HepG2 (cell line): ENCODE measurements at regions of chr7 and their contacts with region 1.

Region 1: DNA sequence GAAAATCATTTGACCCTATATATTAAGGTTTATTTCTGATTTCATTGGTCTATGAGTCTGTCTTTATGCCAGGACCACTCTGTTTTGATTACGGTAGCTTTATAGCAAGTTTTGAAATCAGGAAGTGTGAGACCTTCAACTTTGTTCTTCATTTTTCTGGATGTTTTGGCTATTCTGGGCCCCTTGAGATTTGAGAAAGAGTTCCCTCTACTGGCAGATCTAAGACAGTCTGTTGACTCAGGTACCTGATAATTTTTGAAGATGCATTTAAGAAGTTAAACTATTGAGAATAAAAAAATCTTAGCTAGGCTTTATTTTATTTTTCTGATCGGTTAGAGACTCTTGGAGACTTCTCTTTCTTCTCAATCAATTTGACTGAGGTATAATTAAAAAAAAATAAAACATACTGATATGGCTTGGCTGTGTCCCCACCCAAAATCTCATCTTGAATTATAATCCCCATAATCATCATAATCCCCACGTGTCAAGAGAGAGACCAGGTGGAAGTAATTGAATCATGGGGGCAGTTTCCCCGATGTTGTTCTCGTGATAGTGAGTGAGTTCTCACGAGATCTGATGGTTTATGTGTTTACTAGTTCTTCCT is 209.2 kb downstream of the SNX10 start:
- DNase-seq: peak; percentile 22
- ATAC-seq: no peak; the same call in 2 of the 3 replicates
- H3K4me3 ChIP-seq: no peak overlapping the region
- H3K27ac ChIP-seq: no peak overlapping the region
- H3K4me1 ChIP-seq: no peaks in the 10 kb centered on the region; the same call in 1 of the 2 replicates
- H3K27me3 ChIP-seq: peaks cover 0 to 22% of the 10 kb centered on the region in 2 experiments; a peak in 2 of 5 replicates
- CTCF ChIP-seq: peak; percentile 45
- EP300 ChIP-seq: no peak
- POLR2A ChIP-seq: no peak
- RAD21 ChIP-seq: no peak

Region 2: GRCh38 chr7:26265065-26265464 is 235.8 kb before region 1 on chr7:
- CTCF ChIA-PET with region 1: no interaction called
- POLR2A ChIA-PET with region 1: no interaction called
- in situ Hi-C with region 1: loop called (anchors 25 kb)
- intact Hi-C with region 1: no loop called
- DNase-seq: no peak
- ATAC-seq: no peak
- H3K4me3 ChIP-seq: no peak overlapping the region
- H3K27ac ChIP-seq: no peak overlapping the region
- H3K4me1 ChIP-seq: no peaks in the 10 kb centered on the region
- H3K27me3 ChIP-seq: no peaks in the 10 kb centered on the region
- CTCF ChIP-seq: no peak
- EP300 ChIP-seq: no peak
- POLR2A ChIP-seq: no peak
- RAD21 ChIP-seq: no peak

Region 3: DNA sequence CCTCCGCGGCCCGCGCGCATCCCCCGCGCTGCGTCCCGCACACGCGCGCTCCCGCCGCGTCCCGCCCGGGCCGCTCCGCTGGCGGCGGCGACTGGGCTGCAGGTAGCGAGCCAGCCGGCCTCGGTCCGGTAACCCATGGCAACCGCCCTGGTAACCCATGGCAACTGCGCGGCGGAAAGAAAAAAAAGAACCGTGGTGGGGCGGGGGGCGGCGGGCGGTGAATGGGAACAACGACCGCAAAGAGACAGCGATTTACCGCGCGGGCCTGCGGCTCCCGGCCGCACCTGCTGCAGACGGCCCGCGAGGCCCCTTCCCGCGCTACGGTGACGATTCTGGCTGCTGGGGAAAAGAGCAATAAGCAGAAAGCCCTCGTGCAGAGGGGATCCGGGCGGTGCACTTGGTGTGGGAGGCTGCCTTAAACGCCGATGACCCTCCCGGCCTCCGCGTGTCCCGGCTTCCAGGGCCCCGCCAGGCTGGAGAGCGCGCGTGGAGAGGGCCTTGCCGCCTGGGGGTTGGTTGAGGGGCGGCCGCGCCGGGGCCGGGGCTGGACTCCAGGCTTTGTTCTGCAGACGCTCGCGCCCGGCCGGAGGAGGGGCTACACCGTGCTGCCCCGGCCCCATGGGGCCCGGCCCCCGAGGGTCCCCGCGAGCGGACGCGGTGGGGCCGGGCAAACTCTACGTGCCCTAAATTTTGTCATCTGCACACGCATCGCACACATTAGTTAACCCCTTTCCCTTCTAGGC is 124.5 kb before region 1 on chr7:
- CTCF ChIA-PET with region 1: interaction called, 8 read pairs
- POLR2A ChIA-PET with region 1: no interaction called
- in situ Hi-C with region 1: loop called (anchors 5 kb)
- intact Hi-C with region 1: loop called (anchors 1 kb)
- DNase-seq: peak; percentile 23
- ATAC-seq: peak; percentile 93
- H3K4me3 ChIP-seq: peak overlapping the region; percentile 57 to 74 (median 72)
- H3K27ac ChIP-seq: peak overlapping the region; percentile 31
- H3K4me1 ChIP-seq: peaks cover 5% of the 10 kb centered on the region; the same call in 1 of the 2 replicates
- H3K27me3 ChIP-seq: no peaks in the 10 kb centered on the region
- CTCF ChIP-seq: no peak
- EP300 ChIP-seq: no peak
- POLR2A ChIP-seq: 0 out of 4 replicates have a peak, but pooled peaks of 1 of the 2 experiments have one; percentile 20
- RAD21 ChIP-seq: no peak

Region 4: GRCh38 chr7:26515314-26515842 is 14.5 kb after region 1 on chr7:
- CTCF ChIA-PET with region 1: no interaction called
- POLR2A ChIA-PET with region 1: no interaction called
- in situ Hi-C with region 1: no loop called
- intact Hi-C with region 1: no loop called
- DNase-seq: no peak
- ATAC-seq: no peak
- H3K4me3 ChIP-seq: no peak overlapping the region
- H3K27ac ChIP-seq: no peak overlapping the region
- H3K4me1 ChIP-seq: no peaks in the 10 kb centered on the region
- H3K27me3 ChIP-seq: peaks cover 5 to 47% of the 10 kb centered on the region in 2 experiments; a peak in 4 of 5 replicates
- CTCF ChIP-seq: no peak
- EP300 ChIP-seq: no peak
- POLR2A ChIP-seq: no peak
- RAD21 ChIP-seq: no peak

Region 5: DNA sequence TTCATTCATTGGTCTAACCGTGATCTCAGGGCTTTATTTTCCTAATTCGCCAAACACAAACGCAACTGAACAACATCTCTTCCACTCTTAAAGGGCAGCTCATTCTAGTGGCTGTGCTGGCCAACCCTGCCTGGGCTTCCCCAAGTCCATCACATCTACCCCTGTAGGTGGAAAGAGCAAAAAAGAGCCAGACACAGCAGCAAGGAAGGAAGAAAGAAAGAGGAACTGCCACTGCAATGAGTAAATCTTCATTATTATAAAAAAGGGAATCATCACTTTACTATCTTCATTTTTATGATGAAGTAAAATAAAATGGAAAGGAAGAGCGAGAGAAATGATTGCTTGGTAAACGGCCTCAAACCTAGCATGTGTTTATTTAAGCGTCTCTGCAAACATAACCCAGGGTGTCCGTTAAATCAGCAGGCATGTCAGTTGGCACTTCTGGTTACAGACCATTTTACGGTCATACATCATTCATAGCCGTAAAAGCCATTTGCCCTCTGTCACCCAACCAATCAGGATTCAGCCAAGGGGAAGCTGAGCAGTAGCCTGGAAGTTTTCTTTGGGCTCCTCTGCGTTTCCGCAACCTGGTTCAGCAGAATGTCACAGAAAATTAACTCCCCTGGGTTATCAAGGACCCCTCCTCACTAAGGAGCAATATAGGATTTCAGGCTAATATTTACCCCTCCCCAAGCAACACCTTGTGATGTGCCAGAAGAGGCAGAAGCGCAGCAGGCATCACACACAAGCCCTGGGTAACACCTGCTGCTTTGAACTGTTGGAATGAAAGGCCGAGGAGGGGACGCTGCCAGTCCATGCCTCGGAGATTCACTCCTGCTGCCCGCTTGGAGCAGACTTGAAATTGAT is 24.8 kb after region 1 on chr7:
- CTCF ChIA-PET with region 1: no interaction called
- POLR2A ChIA-PET with region 1: no interaction called
- in situ Hi-C with region 1: no loop called
- intact Hi-C with region 1: no loop called
- DNase-seq: no peak
- ATAC-seq: no peak
- H3K4me3 ChIP-seq: no peak overlapping the region
- H3K27ac ChIP-seq: no peak overlapping the region
- H3K4me1 ChIP-seq: no peaks in the 10 kb centered on the region
- H3K27me3 ChIP-seq: peaks cover 0 to 11% of the 10 kb centered on the region in 2 experiments; a peak in 2 of 5 replicates
- CTCF ChIP-seq: no peak
- EP300 ChIP-seq: no peak
- POLR2A ChIP-seq: no peak
- RAD21 ChIP-seq: no peak

Region 6: DNA sequence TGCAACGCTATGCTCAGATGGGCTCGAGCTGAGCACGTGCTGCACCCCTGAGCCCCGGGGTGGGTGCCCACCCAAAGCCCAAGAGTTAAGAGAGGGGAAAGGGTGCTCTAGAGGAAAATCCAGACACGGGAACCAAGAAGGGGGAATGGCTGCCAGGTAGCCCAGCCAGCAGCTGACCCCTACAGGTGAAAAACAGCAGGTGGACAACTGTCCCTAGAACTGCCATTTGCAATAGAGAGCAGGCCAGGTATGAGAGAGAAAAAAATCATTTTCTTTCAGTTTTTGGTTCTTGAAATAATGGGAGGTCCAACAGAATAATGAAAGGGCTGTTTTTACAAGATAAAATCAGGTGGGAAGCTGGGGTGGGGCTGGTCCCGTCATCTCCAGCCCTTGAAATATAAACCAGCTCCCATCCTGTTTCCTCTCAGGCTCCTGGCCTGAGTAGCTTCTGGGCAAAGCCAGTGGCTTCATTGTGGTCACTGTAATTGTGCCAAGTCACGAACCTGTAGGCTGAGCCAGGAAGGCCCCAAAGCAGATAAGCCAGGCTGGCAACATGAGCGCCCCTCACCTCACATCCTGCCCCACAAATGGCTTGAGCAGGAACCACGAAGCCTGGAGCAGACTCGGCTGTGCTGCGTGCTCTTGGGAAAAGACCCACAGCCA is 48.6 kb after region 1 on chr7:
- CTCF ChIA-PET with region 1: no interaction called
- POLR2A ChIA-PET with region 1: no interaction called
- in situ Hi-C with region 1: no loop called
- intact Hi-C with region 1: no loop called
- DNase-seq: no peak
- ATAC-seq: no peak
- H3K4me3 ChIP-seq: no peak overlapping the region
- H3K27ac ChIP-seq: no peak overlapping the region
- H3K4me1 ChIP-seq: no peaks in the 10 kb centered on the region
- H3K27me3 ChIP-seq: peaks cover 2 to 23% of the 10 kb centered on the region in 2 experiments; a peak in 4 of 5 replicates
- CTCF ChIP-seq: 0 out of 2 replicates have a peak, but pooled peaks have one; percentile 19
- EP300 ChIP-seq: no peak
- POLR2A ChIP-seq: no peak
- RAD21 ChIP-seq: no peak

Region 7: DNA sequence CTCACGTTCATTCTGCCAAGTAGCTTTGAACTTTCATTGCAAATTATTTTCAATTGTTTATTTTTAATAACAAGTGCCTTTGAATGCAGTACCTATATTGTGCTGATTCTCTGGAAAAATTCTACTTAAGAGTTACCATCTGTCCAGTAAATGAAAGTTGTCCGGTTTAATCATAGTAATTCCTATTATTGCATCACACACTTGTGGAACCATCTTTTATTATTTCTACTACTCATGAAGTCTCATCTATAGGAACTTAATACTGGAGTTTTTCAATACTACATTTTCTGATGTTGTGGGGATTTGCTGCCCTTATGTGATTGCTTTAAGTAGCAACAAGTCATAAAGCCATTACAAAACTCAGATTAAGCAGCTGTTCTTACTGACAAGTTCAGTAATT is 380.0 kb after region 1 on chr7:
- CTCF ChIA-PET with region 1: no interaction called
- POLR2A ChIA-PET with region 1: no interaction called
- in situ Hi-C with region 1: no loop called
- intact Hi-C with region 1: no loop called
- DNase-seq: no peak
- ATAC-seq: no peak
- H3K4me3 ChIP-seq: no peak overlapping the region
- H3K27ac ChIP-seq: no peak overlapping the region
- H3K4me1 ChIP-seq: no peaks in the 10 kb centered on the region
- H3K27me3 ChIP-seq: no peaks in the 10 kb centered on the region
- CTCF ChIP-seq: no peak
- EP300 ChIP-seq: no peak
- POLR2A ChIP-seq: no peak
- RAD21 ChIP-seq: no peak